ENCODE measurements at regions of chr1 and their contacts with region 1.

Region 1: GRCh38 chr1:86499987-86500593 is 31.4 kb downstream of the CLCA1 start:
- DNase-seq: peak; percentile 21
- CTCF ChIP-seq: peak; percentile 81

Region 2: GRCh38 chr1:86395771-86396497 is 104.2 kb before region 1 on chr1 and contains the start of gene ODF2L:
- CTCF ChIA-PET with region 1: interaction called, 13 read pairs
- POLR2A ChIA-PET with region 1: no interaction called
- DNase-seq: peak; percentile 86
- CTCF ChIP-seq: no peak

Region 3: GRCh38 chr1:86441581-86441980 is 58.5 kb before region 1 on chr1:
- CTCF ChIA-PET with region 1: interaction called, 10 read pairs
- POLR2A ChIA-PET with region 1: no interaction called
- DNase-seq: no peak
- CTCF ChIP-seq: no peak

Region 4: GRCh38 chr1:86487131-86487810 is 12.8 kb before region 1 on chr1:
- CTCF ChIA-PET with region 1: interaction called, 83 read pairs
- POLR2A ChIA-PET with region 1: no interaction called
- DNase-seq: no peak
- CTCF ChIP-seq: no peak

Region 5: GRCh38 chr1:86696522-86696921 is 196.4 kb after region 1 on chr1:
- CTCF ChIA-PET with region 1: no interaction called
- POLR2A ChIA-PET with region 1: no interaction called
- DNase-seq: no peak
- CTCF ChIP-seq: no peak

Measured in GM10248 (cell line).